ENCODE measurements at regions of chr11 and their contacts with region 1.

Region 1: DNA sequence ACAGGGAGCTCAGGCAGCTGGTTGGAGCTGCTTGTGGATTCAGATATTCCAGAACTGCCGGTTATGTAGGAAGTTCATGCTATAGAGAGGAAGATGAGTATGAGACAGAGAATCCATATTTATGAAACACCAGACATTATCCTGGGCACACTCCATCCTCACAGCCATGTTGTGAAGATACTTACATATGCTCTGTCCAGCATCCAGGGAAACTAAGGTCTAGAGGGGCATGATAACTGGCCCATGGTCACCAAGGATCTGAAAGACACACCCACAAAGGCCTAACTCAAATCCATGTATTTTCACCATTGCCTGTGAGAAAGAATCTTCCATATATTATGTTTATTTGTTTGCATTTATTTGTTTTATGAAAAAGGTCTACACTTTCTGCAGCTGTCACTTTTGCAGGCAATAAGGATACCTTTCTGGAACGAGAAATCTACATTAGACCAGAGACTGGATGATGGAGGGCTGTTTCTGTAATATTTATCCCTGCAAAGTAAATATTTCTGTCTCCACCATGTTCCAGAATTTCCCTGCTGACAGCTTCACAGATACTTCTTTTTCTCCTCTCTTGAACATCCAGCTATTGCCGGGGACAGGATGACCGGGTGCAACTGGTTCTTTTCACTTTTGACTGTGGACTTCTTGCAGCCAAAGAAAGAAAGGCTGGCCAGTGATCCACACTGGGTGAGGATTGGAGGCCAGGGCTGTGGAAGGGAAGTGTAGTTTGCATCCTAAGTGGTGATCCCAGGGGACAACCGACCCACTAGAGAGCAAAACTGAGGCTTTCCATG is 145.9 kb upstream of the NAV2 start:
- DNase-seq: no peak
- H3K4me3 Mint-ChIP-seq: no peak overlapping the region
- H3K27ac Mint-ChIP-seq: no peak overlapping the region
- H3K4me1 Mint-ChIP-seq: no peaks in the 10 kb centered on the region
- H3K27me3 Mint-ChIP-seq: no peaks in the 10 kb centered on the region
- CTCF ChIP-seq: no peak

Region 2: DNA sequence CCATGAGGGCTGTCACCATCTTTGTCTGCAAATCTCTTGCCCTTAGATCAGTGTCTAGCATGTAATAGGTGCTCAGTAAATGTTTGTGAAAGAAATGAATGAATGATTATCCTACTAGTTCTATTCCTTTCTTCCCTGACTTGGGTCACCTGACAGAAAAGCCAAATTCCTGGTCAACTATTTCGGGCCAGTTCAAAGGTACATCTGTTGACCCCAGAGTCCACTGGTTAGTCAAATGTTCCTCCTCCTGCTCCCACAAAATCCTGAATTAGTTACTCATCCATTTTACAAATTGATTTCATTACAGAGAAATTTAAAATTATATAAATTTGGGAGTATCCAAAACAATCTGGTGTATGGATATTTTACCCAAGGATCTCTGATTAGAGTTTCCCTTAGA is 21.2 kb after region 1 on chr11:
- CTCF ChIA-PET with region 1: interaction called, 18 read pairs
- POLR2A ChIA-PET with region 1: no interaction called
- intact Hi-C with region 1: no loop called
- DNase-seq: no peak
- H3K4me3 Mint-ChIP-seq: no peak overlapping the region
- H3K27ac Mint-ChIP-seq: no peak overlapping the region
- H3K4me1 Mint-ChIP-seq: no peaks in the 10 kb centered on the region
- H3K27me3 Mint-ChIP-seq: no peaks in the 10 kb centered on the region
- CTCF ChIP-seq: no peak

Region 3: DNA sequence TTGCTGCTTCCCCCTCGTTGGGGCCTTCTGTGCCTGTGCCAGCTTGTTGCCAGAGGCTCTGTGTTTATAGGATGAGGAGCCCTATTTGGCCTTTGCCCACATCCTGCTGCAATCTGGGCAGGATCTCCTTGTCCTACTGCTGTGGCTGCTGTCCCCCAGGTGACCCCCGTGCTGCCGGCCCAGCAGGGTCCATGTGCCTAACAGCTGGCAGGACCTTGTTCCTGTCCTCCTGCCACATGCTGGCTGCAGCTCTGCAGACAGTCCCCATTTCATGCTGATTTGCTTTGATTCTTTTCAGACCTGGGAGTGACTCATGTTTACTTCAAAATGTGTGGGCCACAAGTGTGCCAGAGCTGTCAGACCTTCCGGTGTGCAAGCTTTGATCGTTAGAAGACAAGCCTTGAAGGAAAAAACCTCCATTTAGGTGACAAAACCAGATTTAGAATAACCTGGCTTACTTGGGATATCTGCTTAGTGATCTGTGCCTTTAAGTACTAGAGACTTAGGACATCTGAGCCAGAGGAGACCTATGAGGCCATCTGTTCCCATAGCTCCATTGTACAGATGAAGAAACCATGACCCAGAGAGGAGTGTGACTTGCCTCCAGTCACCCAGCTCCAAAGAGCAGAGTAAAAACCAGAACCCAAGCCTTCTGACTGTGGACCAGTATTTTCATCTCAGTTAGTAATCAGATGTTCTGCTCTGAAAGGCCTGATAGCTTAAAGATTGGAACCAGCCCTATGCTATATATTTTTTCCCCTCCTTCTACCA is 157.0 kb after region 1 on chr11:
- CTCF ChIA-PET with region 1: interaction called, 28 read pairs
- POLR2A ChIA-PET with region 1: no interaction called
- intact Hi-C with region 1: no loop called
- DNase-seq: peak; percentile 67
- H3K4me3 Mint-ChIP-seq: no peak overlapping the region
- H3K27ac Mint-ChIP-seq: peak overlapping the region; percentile 63
- H3K4me1 Mint-ChIP-seq: peaks cover 41% of the 10 kb centered on the region
- H3K27me3 Mint-ChIP-seq: no peaks in the 10 kb centered on the region
- CTCF ChIP-seq: no peak

Measured in MCF 10A (cell line).